ENCODE measurements at regions of chr5 and their contacts with region 1.

Region 1: GRCh38 chr5:137822158-137822764 is 45.4 kb upstream of the MYOT start:
- DNase-seq: peak in 1 of 6 donors; percentile 51
- ATAC-seq: peak in 3 of 4 donors; percentile 76 to 86 (median 80)
- H3K4me3 ChIP-seq: no peak overlapping the region
- H3K27ac ChIP-seq: no peak overlapping the region
- H3K4me1 ChIP-seq: no peaks in the 10 kb centered on the region
- H3K27me3 ChIP-seq: no peaks in the 10 kb centered on the region
- CTCF ChIP-seq: peak in 3 of 4 donors; percentile 11 to 17 (median 12)

Region 2: DNA sequence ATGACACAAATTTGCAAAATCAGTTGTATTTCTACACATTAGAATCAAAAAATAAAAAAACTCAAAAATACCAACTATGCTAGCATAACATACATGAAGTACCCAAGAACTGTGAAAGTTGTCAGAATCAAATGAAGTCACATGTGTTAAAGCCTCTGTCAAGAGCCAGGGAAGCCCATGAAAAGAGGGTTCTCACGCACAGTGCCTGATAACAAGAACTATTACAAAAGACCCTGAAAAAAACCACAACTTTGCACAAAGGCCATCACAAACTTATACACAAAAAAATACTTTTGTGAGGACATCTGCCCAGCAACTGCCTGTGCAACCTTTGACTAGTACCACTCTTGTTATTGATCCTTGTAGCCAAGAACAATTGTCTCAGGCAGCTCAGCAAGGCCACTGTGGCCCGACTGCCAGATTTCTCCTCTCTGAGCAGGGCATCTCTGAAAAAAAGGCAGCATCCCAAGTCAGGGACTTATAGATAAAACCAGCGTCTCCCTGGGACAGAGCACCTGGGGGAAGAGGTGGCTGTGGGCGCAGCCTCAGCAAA is 39.2 kb before region 1 on chr5:
- intact Hi-C with region 1: loop called in 1 of 3 experiments (anchors 5 kb)
- DNase-seq: no peak
- ATAC-seq: no peak
- H3K4me3 ChIP-seq: no peak overlapping the region
- H3K27ac ChIP-seq: no peak overlapping the region
- H3K4me1 ChIP-seq: no peaks in the 10 kb centered on the region
- H3K27me3 ChIP-seq: no peaks in the 10 kb centered on the region
- CTCF ChIP-seq: no peak

Region 3: DNA sequence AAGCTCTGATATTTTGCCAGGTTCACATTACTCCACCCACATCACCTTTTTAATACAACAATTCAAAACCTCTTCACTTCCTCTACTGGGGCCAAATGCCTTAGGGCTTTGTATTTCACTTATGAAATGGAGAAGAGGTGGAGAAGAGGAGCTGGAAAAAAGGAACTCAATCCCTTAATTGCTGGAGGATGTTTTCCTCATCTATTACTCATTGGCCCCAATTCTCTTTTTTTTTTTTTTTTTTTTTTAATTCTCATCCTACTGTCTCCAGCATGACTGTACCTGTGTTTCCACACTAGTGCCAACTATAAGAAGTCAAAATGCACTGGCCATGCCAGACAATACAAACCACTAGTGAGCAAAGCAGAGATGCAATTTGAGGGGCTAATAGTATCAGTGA is 189.7 kb after region 1 on chr5:
- intact Hi-C with region 1: no loop called
- DNase-seq: no peak
- ATAC-seq: no peak
- H3K4me3 ChIP-seq: no peak overlapping the region
- H3K27ac ChIP-seq: no peak overlapping the region
- H3K4me1 ChIP-seq: no peaks in the 10 kb centered on the region
- H3K27me3 ChIP-seq: no peaks in the 10 kb centered on the region
- CTCF ChIP-seq: no peak

Measured in pancreas (tissue), 10 donors.